ENCODE measurements at regions of chr2 and their contacts with region 1.

Region 1: GRCh38 chr2:144516981-144517865 is 2.7 kb downstream of the ZEB2 start:
- DNase-seq: peak; percentile 67 to 80
- ATAC-seq: peak; percentile 54 to 75 (median 68)
- H3K4me3 ChIP-seq: peak overlapping the region; percentile 85
- H3K4me3 Mint-ChIP-seq: no peak overlapping the region
- H3K27ac ChIP-seq: peak overlapping the region; percentile 99
- H3K27ac Mint-ChIP-seq: no peak overlapping the region
- H3K4me1 ChIP-seq: peaks cover 28% of the 10 kb centered on the region
- H3K4me1 Mint-ChIP-seq: peaks cover 39% of the 10 kb centered on the region in 2 donors
- H3K27me3 ChIP-seq: no peaks in the 10 kb centered on the region
- H3K27me3 Mint-ChIP-seq: peaks cover 0 to 5% of the 10 kb centered on the region in 2 donors
- CTCF ChIP-seq: no peak

Region 2: DNA sequence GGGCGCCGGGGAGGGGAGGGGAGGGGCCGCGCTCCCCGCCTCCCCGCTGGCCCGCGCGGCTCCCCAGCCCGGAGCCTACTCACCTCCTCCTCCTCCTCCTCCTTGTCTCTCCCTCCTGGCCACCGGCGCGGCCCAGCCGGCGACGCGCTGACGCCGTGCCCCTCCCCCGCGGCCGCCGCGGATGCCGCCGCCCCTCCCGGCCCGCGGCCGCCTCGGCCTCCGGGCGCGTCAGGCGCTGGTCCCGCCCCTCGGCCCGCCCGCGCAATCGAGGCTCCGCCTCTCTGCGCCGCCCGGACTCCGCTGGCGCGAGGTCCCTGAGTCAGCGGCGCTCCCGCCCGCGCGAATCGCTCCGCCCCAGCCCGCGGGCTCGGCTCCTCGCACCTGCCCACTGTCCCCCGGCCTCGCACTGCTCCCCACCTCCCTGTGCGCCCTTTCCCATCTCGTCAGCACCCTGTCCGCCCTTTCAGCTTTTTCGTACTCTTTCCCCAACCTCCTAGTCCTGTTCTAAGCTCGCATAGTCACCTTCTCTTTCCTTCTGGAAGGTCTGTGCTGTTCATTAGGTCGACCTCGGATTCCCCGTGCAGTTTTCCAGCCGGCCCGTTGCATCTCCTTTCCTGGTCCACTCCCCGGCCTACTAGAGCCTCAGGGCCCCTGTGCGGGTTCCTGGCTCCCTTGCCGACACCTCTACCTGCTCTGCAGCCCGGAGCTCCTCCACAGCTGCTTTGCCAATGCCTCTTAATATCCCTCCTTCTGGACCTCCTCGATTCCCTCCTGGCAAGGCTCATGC is 184.7 kb before region 1 on chr2:
- intact Hi-C with region 1: loop called (anchors 5 kb)
- DNase-seq: peak; percentile 90 to 95
- ATAC-seq: peak; percentile 89 to 97 (median 90)
- H3K4me3 ChIP-seq: peak overlapping the region; percentile 60
- H3K4me3 Mint-ChIP-seq: peak overlapping the region; percentile 91
- H3K27ac ChIP-seq: peak overlapping the region; percentile 58
- H3K27ac Mint-ChIP-seq: peak overlapping the region; percentile 87 to 93
- H3K4me1 ChIP-seq: peaks cover 15% of the 10 kb centered on the region
- H3K4me1 Mint-ChIP-seq: peaks cover 36 to 39% of the 10 kb centered on the region in 2 donors
- H3K27me3 ChIP-seq: no peaks in the 10 kb centered on the region
- H3K27me3 Mint-ChIP-seq: no peaks in the 10 kb centered on the region
- CTCF ChIP-seq: no peak

Region 3: GRCh38 chr2:144529841-144530240 is 12.6 kb after region 1 on chr2:
- intact Hi-C with region 1: no loop called
- DNase-seq: no peak
- ATAC-seq: no peak
- H3K4me3 ChIP-seq: no peak overlapping the region
- H3K4me3 Mint-ChIP-seq: no peak overlapping the region
- H3K27ac ChIP-seq: no peak overlapping the region
- H3K27ac Mint-ChIP-seq: no peak overlapping the region
- H3K4me1 ChIP-seq: peaks cover under 1% of the 10 kb centered on the region
- H3K4me1 Mint-ChIP-seq: peaks cover 2 to 7% of the 10 kb centered on the region in 2 donors
- H3K27me3 ChIP-seq: no peaks in the 10 kb centered on the region
- H3K27me3 Mint-ChIP-seq: peaks cover 0 to 2% of the 10 kb centered on the region in 2 donors
- CTCF ChIP-seq: no peak

Region 4: GRCh38 chr2:144643537-144644336 is 126.5 kb after region 1 on chr2:
- intact Hi-C with region 1: no loop called
- DNase-seq: no peak
- ATAC-seq: no peak
- H3K4me3 ChIP-seq: no peak overlapping the region
- H3K4me3 Mint-ChIP-seq: no peak overlapping the region
- H3K27ac ChIP-seq: no peak overlapping the region
- H3K27ac Mint-ChIP-seq: no peak overlapping the region
- H3K4me1 ChIP-seq: peaks cover 1% of the 10 kb centered on the region
- H3K4me1 Mint-ChIP-seq: peaks cover 10 to 12% of the 10 kb centered on the region in 2 donors
- H3K27me3 ChIP-seq: no peaks in the 10 kb centered on the region
- H3K27me3 Mint-ChIP-seq: peaks cover 0 to 16% of the 10 kb centered on the region in 2 donors
- CTCF ChIP-seq: no peak

Region 5: DNA sequence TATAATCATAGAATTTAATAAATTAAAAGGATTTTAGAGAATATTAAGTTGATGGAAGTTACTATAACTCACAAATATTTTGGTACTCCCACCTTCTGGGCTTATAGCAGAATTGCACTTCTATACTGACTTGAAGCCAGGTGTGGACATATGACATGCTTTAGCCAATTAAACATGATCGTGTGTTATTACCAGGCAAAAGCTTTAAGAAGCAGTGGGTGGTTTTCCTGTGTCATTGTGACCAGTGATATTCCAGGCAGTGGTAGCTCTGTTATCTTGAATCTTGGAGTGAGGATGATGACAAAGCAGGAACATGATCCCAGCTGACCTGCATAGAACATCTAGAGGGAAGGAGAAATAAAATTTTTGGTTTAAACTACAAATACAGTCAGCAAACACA is 373.6 kb after region 1 on chr2:
- intact Hi-C with region 1: loop called (anchors 5 kb)
- DNase-seq: peak in 1 of 2 donors; percentile 23
- ATAC-seq: peak; percentile 75 to 94 (median 93)
- H3K4me3 ChIP-seq: no peak overlapping the region
- H3K4me3 Mint-ChIP-seq: no peak overlapping the region
- H3K27ac ChIP-seq: no peak overlapping the region
- H3K27ac Mint-ChIP-seq: no peak overlapping the region
- H3K4me1 ChIP-seq: no peaks in the 10 kb centered on the region
- H3K4me1 Mint-ChIP-seq: peaks cover 0 to 6% of the 10 kb centered on the region in 2 donors
- H3K27me3 ChIP-seq: no peaks in the 10 kb centered on the region
- H3K27me3 Mint-ChIP-seq: no peaks in the 10 kb centered on the region
- CTCF ChIP-seq: no peak

Region 6: GRCh38 chr2:145186303-145186702 is 669.1 kb after region 1 on chr2:
- intact Hi-C with region 1: loop called (anchors 10 kb)
- DNase-seq: no peak
- ATAC-seq: no peak
- H3K4me3 ChIP-seq: no peak overlapping the region
- H3K4me3 Mint-ChIP-seq: no peak overlapping the region
- H3K27ac ChIP-seq: no peak overlapping the region
- H3K27ac Mint-ChIP-seq: no peak overlapping the region
- H3K4me1 ChIP-seq: no peaks in the 10 kb centered on the region
- H3K4me1 Mint-ChIP-seq: peaks cover 23 to 25% of the 10 kb centered on the region in 2 donors
- H3K27me3 ChIP-seq: no peaks in the 10 kb centered on the region
- H3K27me3 Mint-ChIP-seq: peaks cover 3 to 23% of the 10 kb centered on the region in 2 donors
- CTCF ChIP-seq: no peak

Measured in natural killer cell (primary cell).